CD4-positive, alpha-beta memory T cell (primary cell): ENCODE measurements at regions of chr15 and their contacts with region 1.

Region 1: GRCh38 chr15:74635228-74635627 is 19.6 kb downstream of the CLK3 start:
- DNase-seq: peak; percentile 68 to 70 (median 68)
- H3K4me3 ChIP-seq: no peak overlapping the region
- H3K4me3 Mint-ChIP-seq: no peak overlapping the region
- H3K27ac ChIP-seq: no peak overlapping the region
- H3K27ac Mint-ChIP-seq: peak overlapping the region in 3 of 7 donors; percentile 5 to 79 (median 14)
- H3K4me1 ChIP-seq: no peaks in the 10 kb centered on the region
- H3K4me1 Mint-ChIP-seq: peaks cover 1 to 6% (median 4%) of the 10 kb centered on the region in 4 donors
- H3K27me3 ChIP-seq: no peaks in the 10 kb centered on the region
- H3K27me3 Mint-ChIP-seq: no peaks in the 10 kb centered on the region

Region 2: GRCh38 chr15:74438721-74439316 is 196.4 kb before region 1 on chr15:
- CTCF ChIA-PET with region 1: no interaction called
- POLR2A ChIA-PET with region 1: no interaction called
- intact Hi-C with region 1: loop called (anchors 1 kb)
- DNase-seq: peak; percentile 61 to 71 (median 66)
- H3K4me3 ChIP-seq: no peak overlapping the region
- H3K4me3 Mint-ChIP-seq: peak overlapping the region in 1 of 8 donors; percentile 44
- H3K27ac ChIP-seq: no peak overlapping the region
- H3K27ac Mint-ChIP-seq: peak overlapping the region in 1 of 7 donors; percentile 9
- H3K4me1 ChIP-seq: peaks cover 11% of the 10 kb centered on the region
- H3K4me1 Mint-ChIP-seq: peaks cover 4 to 17% (median 11%) of the 10 kb centered on the region in 4 donors
- H3K27me3 ChIP-seq: no peaks in the 10 kb centered on the region
- H3K27me3 Mint-ChIP-seq: no peaks in the 10 kb centered on the region

Region 3: DNA sequence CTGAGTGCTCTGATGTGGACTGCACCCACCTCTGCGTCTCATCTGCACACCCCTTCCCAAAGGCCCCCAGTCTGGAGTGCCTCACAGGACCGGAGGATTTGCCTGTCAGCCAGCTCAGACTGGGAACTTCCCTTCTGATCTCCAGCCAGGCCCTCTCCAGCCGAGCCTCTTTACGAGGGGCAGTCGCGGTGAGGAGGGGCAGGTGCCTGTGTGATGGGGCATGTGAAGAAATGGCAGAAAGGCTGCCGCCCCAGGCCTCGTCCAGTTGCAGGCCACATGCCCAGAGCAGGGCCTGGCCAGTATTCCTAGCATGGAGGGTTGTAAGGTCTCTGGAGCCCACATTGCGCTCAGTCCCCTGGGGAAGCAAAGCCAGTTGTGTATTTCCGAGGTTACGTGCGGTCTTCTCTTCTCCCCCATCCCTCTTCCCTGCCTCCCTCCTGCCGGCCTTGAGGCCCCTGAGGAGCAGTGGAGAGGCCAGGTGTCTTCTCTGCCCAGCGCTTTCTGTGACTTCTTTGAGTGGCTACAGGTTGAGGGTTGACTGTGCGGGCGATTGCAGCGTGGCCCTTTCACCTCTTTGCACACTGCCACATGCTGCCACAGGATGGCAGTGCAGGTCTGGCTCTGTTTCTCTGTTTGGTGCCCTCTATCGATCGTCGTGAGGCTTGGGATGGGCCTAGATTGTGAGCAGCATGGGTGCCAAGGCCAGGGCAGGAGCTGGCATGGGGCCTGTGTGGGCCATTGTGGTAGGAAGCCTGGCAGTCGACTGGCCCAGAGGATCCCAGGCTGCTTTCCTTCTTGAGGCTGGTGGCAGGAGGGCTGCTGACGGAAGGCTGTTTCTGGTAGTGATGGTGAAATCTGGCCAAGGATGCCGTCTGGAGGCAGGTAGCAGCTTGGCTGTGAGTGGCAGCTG is 14.3 kb before region 1 on chr15:
- CTCF ChIA-PET with region 1: interaction called, 84 read pairs
- POLR2A ChIA-PET with region 1: interaction called, 21 read pairs
- intact Hi-C with region 1: no loop called
- DNase-seq: peak; percentile 71 to 80 (median 73)
- H3K4me3 ChIP-seq: no peak overlapping the region
- H3K4me3 Mint-ChIP-seq: peak overlapping the region in 2 of 8 donors; percentile 34 to 75
- H3K27ac ChIP-seq: peak overlapping the region; percentile 16
- H3K27ac Mint-ChIP-seq: peak overlapping the region; percentile 39 to 93 (median 80)
- H3K4me1 ChIP-seq: peaks cover 47% of the 10 kb centered on the region
- H3K4me1 Mint-ChIP-seq: peaks cover 33 to 52% (median 39%) of the 10 kb centered on the region in 4 donors
- H3K27me3 ChIP-seq: no peaks in the 10 kb centered on the region
- H3K27me3 Mint-ChIP-seq: no peaks in the 10 kb centered on the region

Region 4: DNA sequence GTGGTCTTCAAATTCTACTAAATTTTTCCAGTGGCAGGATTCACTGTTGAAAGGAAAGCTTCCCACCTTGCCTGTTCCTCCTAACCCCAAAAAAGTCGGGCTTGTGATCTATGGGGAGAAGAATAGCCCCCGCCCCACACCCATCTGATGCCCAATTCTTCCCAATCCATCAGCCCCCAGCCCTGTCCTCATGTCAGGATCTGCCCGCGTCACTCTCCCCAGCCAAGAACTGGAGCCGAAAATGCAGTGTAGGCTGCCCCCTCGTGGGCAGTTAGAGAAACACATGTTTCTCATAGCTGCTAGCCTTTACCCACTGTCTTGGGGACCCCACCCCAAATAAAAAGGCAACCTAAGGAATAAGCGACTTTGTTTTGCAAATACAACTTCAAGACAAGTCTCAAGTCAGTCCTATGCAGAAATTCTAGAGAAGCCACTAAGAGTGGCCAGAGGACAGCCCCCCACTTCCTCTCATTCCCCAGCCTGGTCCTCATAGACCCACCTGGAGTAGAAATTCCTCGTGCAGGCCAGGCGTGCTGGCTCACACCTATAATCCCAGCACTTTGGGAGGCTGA is 133.6 kb after region 1 on chr15:
- CTCF ChIA-PET with region 1: interaction called, 389 read pairs
- POLR2A ChIA-PET with region 1: interaction called, 10 read pairs
- intact Hi-C with region 1: loop called (anchors 1 kb)
- DNase-seq: peak; percentile 60 to 67 (median 60)
- H3K4me3 ChIP-seq: no peak overlapping the region
- H3K4me3 Mint-ChIP-seq: peak overlapping the region in 2 of 8 donors; percentile 0 to 30
- H3K27ac ChIP-seq: no peak overlapping the region
- H3K27ac Mint-ChIP-seq: peak overlapping the region in 4 of 7 donors; percentile 7 to 81 (median 19)
- H3K4me1 ChIP-seq: peaks cover 22% of the 10 kb centered on the region
- H3K4me1 Mint-ChIP-seq: peaks cover 8 to 36% (median 16%) of the 10 kb centered on the region in 4 donors
- H3K27me3 ChIP-seq: no peaks in the 10 kb centered on the region
- H3K27me3 Mint-ChIP-seq: peaks cover 3 to 4% of the 10 kb centered on the region in 2 donors

Region 5: DNA sequence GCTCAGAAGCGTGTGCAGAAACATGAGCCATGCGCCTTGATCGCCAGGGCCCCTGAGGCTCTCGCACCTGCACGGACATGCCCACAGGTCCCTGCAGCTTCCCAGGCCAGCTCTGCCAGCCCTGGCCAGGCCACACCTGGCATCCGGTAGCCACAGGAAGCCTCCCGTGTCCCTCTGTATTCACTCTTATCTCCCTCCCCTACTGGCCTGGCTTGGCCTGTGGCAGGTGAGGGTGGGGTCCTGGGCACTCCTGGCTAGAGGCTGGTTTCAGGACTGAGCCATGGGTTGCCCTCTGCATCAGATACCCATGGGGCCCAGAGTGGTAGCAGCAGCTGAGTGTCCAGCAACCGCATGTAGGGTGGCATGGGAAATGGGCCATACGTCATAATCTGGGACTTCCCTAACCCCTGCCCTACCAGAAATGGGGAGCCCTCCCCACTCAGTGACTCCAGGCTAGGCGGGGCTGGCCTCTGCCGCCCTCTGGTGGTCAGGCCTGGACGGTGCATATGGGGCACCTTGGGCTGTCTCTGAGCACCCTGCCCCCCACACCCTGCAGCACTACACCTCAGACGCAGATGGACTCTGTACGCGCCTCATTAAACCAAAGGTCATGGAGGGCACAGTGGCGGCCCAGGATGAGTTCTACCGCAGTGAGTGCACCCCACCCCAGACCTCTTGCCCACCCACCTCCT is 164.8 kb after region 1 on chr15:
- CTCF ChIA-PET with region 1: interaction called, 77 read pairs
- POLR2A ChIA-PET with region 1: no interaction called
- intact Hi-C with region 1: loop called (anchors 1 kb)
- DNase-seq: peak; percentile 84 to 89 (median 86)
- H3K4me3 ChIP-seq: no peak overlapping the region
- H3K4me3 Mint-ChIP-seq: peak overlapping the region in 4 of 8 donors; percentile 17 to 65 (median 46)
- H3K27ac ChIP-seq: peak overlapping the region; percentile 84
- H3K27ac Mint-ChIP-seq: peak overlapping the region; percentile 83 to 97 (median 94)
- H3K4me1 ChIP-seq: peaks cover 55% of the 10 kb centered on the region
- H3K4me1 Mint-ChIP-seq: peaks cover 28 to 59% (median 45%) of the 10 kb centered on the region in 4 donors
- H3K27me3 ChIP-seq: no peaks in the 10 kb centered on the region
- H3K27me3 Mint-ChIP-seq: no peaks in the 10 kb centered on the region

Region 6: DNA sequence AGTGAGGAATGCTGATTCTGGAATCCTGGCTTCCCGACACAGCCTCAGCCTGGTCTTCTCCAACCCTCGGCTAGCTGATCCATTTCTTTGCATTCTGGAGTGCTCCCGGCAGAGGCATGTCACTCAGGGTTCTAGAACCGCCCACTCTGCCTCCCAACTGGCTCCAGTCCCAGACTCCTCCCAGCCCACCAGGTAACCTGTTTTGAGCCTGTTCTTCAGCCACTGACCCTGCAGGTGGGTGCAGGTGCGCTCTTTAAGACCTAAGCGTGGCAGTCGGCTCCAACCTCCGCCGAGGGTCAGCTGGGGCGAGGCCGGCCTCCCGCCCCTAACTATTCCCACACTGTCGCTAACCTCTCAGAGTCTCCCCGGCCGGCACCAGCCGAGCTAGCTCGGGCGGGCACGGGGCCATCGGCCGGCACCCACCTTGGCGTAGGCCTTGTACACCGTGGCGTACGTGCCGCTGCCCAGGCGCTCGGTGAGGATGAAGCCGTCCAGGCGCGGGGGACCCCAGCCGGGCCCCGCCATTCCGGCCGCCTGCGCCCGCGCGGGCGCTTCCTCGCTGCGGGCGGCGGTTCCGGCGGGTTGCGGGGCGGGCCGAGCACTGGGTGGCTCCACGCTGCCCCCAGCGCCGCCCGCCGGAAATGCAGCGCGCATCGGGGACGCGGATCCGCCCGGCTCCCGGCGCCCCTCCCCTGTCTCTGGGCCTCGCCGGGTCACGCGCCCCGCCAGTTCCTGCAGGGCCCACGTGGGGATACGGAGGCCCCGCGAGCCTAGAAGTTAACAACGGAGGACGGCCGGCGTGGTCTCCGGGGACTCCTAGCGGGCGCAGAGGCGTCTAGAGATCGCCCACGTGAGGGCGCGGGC is 207.6 kb after region 1 on chr15 and contains the start of gene ULK3:
- CTCF ChIA-PET with region 1: no interaction called
- POLR2A ChIA-PET with region 1: no interaction called
- intact Hi-C with region 1: loop called (anchors 5 kb)
- DNase-seq: peak; percentile 92 to 94 (median 93)
- H3K4me3 ChIP-seq: peak within 1 kb of the TSS; percentile 81 to 83
- H3K4me3 Mint-ChIP-seq: peak within 1 kb of the TSS; percentile 87 to 92 (median 91)
- H3K27ac ChIP-seq: peak within 1 kb of the TSS; percentile 77
- H3K27ac Mint-ChIP-seq: peak within 1 kb of the TSS; percentile 91 to 97 (median 93)
- H3K4me1 ChIP-seq: peaks cover 52% of the 10 kb centered on the region
- H3K4me1 Mint-ChIP-seq: peaks cover 37 to 57% (median 46%) of the 10 kb centered on the region in 4 donors
- H3K27me3 ChIP-seq: no peaks in the 10 kb centered on the region
- H3K27me3 Mint-ChIP-seq: no peaks in the 10 kb centered on the region
- total RNA-seq, gene ULK3: 84.9 to 88.3 TPM

Region 7: GRCh38 chr15:74950078-74951000 is 315.1 kb after region 1 on chr15:
- CTCF ChIA-PET with region 1: interaction called, 57 read pairs
- POLR2A ChIA-PET with region 1: interaction called, 4 read pairs
- intact Hi-C with region 1: loop called (anchors 1 kb)
- DNase-seq: peak; percentile 70 to 79 (median 75)
- H3K4me3 ChIP-seq: no peak overlapping the region
- H3K4me3 Mint-ChIP-seq: no peak overlapping the region
- H3K27ac ChIP-seq: no peak overlapping the region
- H3K27ac Mint-ChIP-seq: peak overlapping the region in 1 of 7 donors; percentile 1
- H3K4me1 ChIP-seq: peaks cover 6% of the 10 kb centered on the region
- H3K4me1 Mint-ChIP-seq: peaks cover under 1 to 11% (median 3%) of the 10 kb centered on the region in 4 donors
- H3K27me3 ChIP-seq: no peaks in the 10 kb centered on the region
- H3K27me3 Mint-ChIP-seq: peaks cover 2% of the 10 kb centered on the region in 2 donors